CD4-positive, alpha-beta T cell (primary cell): ENCODE measurements at regions of chr1 and their contacts with region 1.

Region 1: GRCh38 chr1:64928325-64928724 is 38.0 kb downstream of the JAK1 start:
- DNase-seq: peak in 1 of 14 experiments; percentile 12
- ATAC-seq: no peak
- H3K4me3 ChIP-seq: no peak overlapping the region
- H3K4me3 Mint-ChIP-seq: peak overlapping the region; percentile 52
- H3K27ac ChIP-seq: no peak overlapping the region
- H3K27ac Mint-ChIP-seq: peak overlapping the region; percentile 60
- H3K4me1 ChIP-seq: peaks cover 48% of the 10 kb centered on the region
- H3K4me1 Mint-ChIP-seq: peaks cover 95% of the 10 kb centered on the region
- H3K27me3 ChIP-seq: no peaks in the 10 kb centered on the region
- H3K27me3 Mint-ChIP-seq: no peaks in the 10 kb centered on the region
- CTCF ChIP-seq: no peak

Region 2: GRCh38 chr1:64051796-64052195 is 876.5 kb before region 1 on chr1:
- CTCF ChIA-PET with region 1: no interaction called
- POLR2A ChIA-PET with region 1: no interaction called
- intact Hi-C with region 1: no loop called
- DNase-seq: no peak
- ATAC-seq: no peak
- H3K4me3 ChIP-seq: no peak overlapping the region
- H3K4me3 Mint-ChIP-seq: no peak overlapping the region
- H3K27ac ChIP-seq: no peak overlapping the region
- H3K27ac Mint-ChIP-seq: no peak overlapping the region
- H3K4me1 ChIP-seq: no peaks in the 10 kb centered on the region
- H3K4me1 Mint-ChIP-seq: no peaks in the 10 kb centered on the region
- H3K27me3 ChIP-seq: no peaks in the 10 kb centered on the region
- H3K27me3 Mint-ChIP-seq: no peaks in the 10 kb centered on the region
- CTCF ChIP-seq: no peak

Region 3: DNA sequence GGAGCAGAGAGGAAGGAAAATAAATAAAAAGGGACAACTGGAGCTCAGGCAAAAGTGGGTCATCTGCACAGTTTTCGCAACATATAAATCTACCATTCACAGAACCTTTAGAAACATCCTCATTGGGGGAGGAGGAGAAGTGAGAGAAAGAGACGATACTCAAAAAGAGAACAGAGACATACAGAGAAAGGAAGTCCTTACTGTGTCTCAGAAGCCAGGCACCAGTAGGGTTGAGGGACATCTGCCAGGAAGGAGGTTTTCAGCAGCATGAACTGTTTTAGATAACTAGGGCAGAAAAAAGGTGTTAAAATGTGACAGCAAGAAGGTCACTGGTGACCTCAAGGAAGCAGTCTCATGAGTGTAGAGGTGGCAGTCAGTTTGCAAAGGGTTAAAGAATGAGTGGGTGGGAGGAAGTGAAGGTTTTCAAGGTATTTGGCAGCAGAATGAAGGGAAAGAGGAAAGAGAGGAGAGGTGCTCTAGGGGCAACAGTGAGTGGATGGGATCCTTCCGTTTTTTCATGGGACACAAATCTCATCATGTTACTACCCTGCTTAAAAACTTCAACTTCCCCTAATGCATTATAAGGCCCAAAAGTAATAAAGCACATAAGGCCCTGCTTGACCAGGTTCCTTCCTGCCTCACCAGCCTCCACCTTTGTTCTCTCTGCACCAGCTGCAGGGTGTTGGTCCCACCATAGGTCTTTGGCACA is 28.6 kb after region 1 on chr1:
- CTCF ChIA-PET with region 1: interaction called, 9 read pairs
- POLR2A ChIA-PET with region 1: interaction called, 5 read pairs
- intact Hi-C with region 1: loop called (anchors 5 kb)
- DNase-seq: peak in 4 of 14 experiments; percentile 26 to 47 (median 42)
- ATAC-seq: peak; percentile 31
- H3K4me3 ChIP-seq: peak overlapping the region; percentile 8
- H3K4me3 Mint-ChIP-seq: no peak overlapping the region
- H3K27ac ChIP-seq: peak overlapping the region; percentile 1 to 10
- H3K27ac Mint-ChIP-seq: no peak overlapping the region
- H3K4me1 ChIP-seq: peaks cover 67% of the 10 kb centered on the region
- H3K4me1 Mint-ChIP-seq: peaks cover 58% of the 10 kb centered on the region
- H3K27me3 ChIP-seq: no peaks in the 10 kb centered on the region
- H3K27me3 Mint-ChIP-seq: no peaks in the 10 kb centered on the region
- CTCF ChIP-seq: no peak